CD14-positive monocyte (primary cell): ENCODE measurements at regions of chr1 and their contacts with region 1.

Region 1: GRCh38 chr1:12619792-12620487 is 1.9 kb upstream of the DHRS3 start:
- DNase-seq: peak in 2 of 3 donors; percentile 75 to 83
- H3K4me3 ChIP-seq: peak overlapping the region in 1 of 3 experiments; percentile 81
- H3K4me3 Mint-ChIP-seq: peak overlapping the region; percentile 96 to 98
- H3K27ac ChIP-seq: no peak overlapping the region
- H3K27ac Mint-ChIP-seq: peak overlapping the region in 4 of 7 donors; percentile 28 to 88 (median 66)
- H3K4me1 ChIP-seq: peaks cover 58 to 60% of the 10 kb centered on the region in 2 donors
- H3K4me1 Mint-ChIP-seq: peaks cover 50% of the 10 kb centered on the region
- H3K27me3 ChIP-seq: peaks cover 0 to 36% of the 10 kb centered on the region in 2 donors
- H3K27me3 Mint-ChIP-seq: peaks cover 32 to 47% (median 42%) of the 10 kb centered on the region in 3 donors
- CTCF ChIP-seq: peak; percentile 92

Region 2: GRCh38 chr1:12511516-12512468 is 108.1 kb before region 1 on chr1:
- intact Hi-C with region 1: loop called in 1 of 2 experiments (anchors 2 kb)
- DNase-seq: no peak
- H3K4me3 ChIP-seq: no peak overlapping the region
- H3K4me3 Mint-ChIP-seq: peak overlapping the region in 1 of 2 donors; percentile 20
- H3K27ac ChIP-seq: no peak overlapping the region
- H3K27ac Mint-ChIP-seq: peak overlapping the region in 2 of 7 donors; percentile 32 to 76
- H3K4me1 ChIP-seq: peaks cover 13 to 15% of the 10 kb centered on the region in 2 donors
- H3K4me1 Mint-ChIP-seq: peaks cover 18% of the 10 kb centered on the region
- H3K27me3 ChIP-seq: no peaks in the 10 kb centered on the region
- H3K27me3 Mint-ChIP-seq: peaks cover 0 to 4% (median 0%) of the 10 kb centered on the region in 3 donors
- CTCF ChIP-seq: no peak

Region 3: DNA sequence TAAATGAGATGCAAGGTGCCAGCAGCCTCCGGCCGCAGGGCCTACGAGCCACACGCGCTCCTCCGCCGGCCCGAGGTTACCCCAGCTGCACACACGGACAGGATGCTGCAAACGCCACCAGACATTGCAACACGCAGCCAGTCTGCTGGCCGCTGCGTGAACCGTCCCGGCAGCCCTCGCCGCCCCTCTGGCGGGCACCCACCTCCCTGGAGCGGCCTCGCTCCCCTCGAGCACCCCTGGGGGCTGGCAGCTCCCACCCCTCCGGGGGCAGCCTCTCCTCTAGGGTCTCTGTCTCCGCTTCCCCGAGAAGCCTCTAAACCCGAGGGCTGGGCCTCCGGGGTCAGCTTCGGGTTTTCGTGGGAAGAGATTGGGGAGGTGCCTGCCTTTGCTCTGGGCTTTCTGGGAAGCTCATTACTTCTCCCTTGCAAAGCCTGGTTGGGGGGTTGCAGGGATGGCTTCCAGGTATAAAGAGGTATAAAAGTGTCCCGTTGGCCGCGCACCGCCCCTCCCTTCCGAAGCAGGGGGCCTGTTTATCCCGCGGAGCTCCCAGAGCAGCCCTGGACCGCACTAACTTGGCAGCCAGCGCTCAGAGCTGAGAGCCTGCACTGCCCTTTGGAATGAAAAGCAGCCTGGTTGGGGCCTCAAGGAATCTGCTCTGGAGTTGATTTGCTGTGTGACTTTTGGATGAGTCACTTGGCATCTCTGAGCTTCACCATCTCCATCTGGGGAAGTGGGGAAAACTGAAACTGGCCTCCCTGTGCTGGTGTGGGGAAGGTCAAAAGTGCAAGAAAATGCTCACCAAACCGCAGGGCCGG is 23.7 kb before region 1 on chr1:
- intact Hi-C with region 1: loop called in 1 of 2 experiments (anchors 2 kb)
- DNase-seq: peak; percentile 96 to 97 (median 96)
- H3K4me3 ChIP-seq: peak overlapping the region in 2 of 3 experiments; percentile 18 to 70
- H3K4me3 Mint-ChIP-seq: peak overlapping the region; percentile 73 to 74
- H3K27ac ChIP-seq: peak overlapping the region in 1 of 2 donors; percentile 63
- H3K27ac Mint-ChIP-seq: peak overlapping the region; percentile 38 to 96 (median 90)
- H3K4me1 ChIP-seq: peaks cover 34 to 38% of the 10 kb centered on the region in 2 donors
- H3K4me1 Mint-ChIP-seq: peaks cover 44% of the 10 kb centered on the region
- H3K27me3 ChIP-seq: peaks cover 2 to 17% of the 10 kb centered on the region in 2 donors
- H3K27me3 Mint-ChIP-seq: peaks cover 27 to 47% (median 45%) of the 10 kb centered on the region in 3 donors
- CTCF ChIP-seq: no peak

Region 4: DNA sequence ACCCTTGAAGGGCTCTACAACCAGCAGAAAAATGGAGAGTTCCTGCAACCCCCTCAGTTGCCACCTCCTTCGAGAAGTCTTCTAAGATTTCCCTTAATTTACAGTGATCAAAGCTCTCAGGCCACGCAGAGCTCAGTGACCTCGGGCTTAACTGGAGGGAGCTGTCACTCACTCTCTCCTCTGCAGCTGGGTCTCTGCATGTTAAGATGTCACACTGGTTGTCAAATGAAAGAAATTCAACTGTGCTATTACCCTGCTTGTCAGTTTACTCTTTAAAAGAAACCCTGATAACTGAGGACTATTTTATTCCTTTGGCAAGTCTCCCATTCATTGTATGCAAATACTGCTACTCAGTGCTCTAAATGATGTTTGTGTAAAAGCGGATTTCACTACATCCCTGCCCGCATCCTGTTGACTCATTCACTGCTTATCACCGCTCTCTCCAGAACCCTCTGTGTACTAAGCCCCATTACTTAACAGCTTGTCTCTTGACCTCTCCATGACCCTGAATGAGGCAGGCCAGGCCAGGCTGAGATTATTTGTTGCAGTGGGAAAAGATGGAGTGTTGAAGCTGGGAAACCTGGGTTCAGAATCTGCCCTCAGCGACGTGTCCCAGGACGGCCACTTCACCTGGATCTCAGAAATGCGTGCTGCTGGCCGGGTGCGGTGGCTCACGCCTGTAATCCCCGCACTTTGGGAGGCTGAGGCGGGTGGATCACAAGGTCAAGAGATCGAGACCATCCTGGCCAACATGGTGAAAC is 15.6 kb before region 1 on chr1:
- intact Hi-C with region 1: loop called (anchors 1 to 2 kb)
- DNase-seq: peak; percentile 92 to 98 (median 97)
- H3K4me3 ChIP-seq: peak overlapping the region in 1 of 3 experiments; percentile 40
- H3K4me3 Mint-ChIP-seq: peak overlapping the region; percentile 52 to 76
- H3K27ac ChIP-seq: peak overlapping the region in 1 of 2 donors; percentile 68
- H3K27ac Mint-ChIP-seq: peak overlapping the region; percentile 86 to 95 (median 88)
- H3K4me1 ChIP-seq: peaks cover 40 to 44% of the 10 kb centered on the region in 2 donors
- H3K4me1 Mint-ChIP-seq: peaks cover 55% of the 10 kb centered on the region
- H3K27me3 ChIP-seq: peaks cover 0 to 2% of the 10 kb centered on the region in 2 donors
- H3K27me3 Mint-ChIP-seq: peaks cover 18 to 33% (median 30%) of the 10 kb centered on the region in 3 donors
- CTCF ChIP-seq: no peak